CD8-positive, alpha-beta T cell (primary cell): ENCODE measurements at regions of chr11 and their contacts with region 1.

Region 1: DNA sequence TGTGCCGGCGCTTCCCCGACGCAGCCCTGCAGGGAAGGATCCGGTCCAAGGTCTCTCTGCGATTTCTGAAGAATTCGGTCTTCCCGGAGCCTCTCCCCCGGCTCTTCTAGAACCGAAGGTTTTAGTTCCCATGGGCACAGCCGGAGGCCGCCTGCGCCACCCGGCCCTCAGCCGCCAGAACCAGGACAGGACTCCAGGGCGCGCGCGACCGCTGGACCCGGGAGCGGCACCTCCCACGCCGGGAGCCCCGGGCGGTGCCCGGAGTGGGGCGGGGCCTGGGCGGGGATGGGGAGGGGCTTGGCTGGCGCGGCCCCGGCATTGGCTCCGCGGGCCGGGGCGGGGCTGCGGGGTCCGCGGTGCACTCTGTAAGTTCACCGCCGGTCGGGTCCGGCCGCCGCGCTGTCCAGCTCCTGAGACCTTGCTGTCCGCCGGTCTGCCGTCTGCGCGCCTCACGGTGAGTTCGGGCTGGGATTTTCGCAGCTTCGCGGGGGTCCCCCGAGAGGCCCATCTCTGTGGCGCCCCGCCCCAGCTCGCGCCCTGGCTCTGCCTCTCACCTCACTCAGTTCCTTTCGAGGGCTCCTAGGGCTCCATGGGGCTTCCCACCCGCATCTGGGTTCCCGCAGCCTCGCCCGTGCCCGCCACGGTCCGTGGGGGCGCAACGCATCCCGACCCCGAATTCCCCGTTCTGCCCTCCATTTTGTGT is at the start of gene CDC42EP2:
- DNase-seq: peak; percentile 45 to 83 (median 72)
- ATAC-seq: peak; percentile 90
- H3K4me3 ChIP-seq: peak within 1 kb of the TSS; percentile 73 to 81
- H3K4me3 Mint-ChIP-seq: peak within 1 kb of the TSS; percentile 80
- H3K27ac ChIP-seq: no peak within 1 kb of the TSS
- H3K27ac Mint-ChIP-seq: no peak within 1 kb of the TSS
- H3K4me1 ChIP-seq: peaks cover 15% of the 10 kb centered on the region
- H3K4me1 Mint-ChIP-seq: peaks cover 7% of the 10 kb centered on the region
- H3K27me3 ChIP-seq: peaks cover 0 to 5% of the 10 kb centered on the region in 2 experiments
- H3K27me3 Mint-ChIP-seq: no peaks in the 10 kb centered on the region
- CTCF ChIP-seq: no peak
- total RNA-seq, gene CDC42EP2: 0.67 to 0.76 TPM

Region 2: DNA sequence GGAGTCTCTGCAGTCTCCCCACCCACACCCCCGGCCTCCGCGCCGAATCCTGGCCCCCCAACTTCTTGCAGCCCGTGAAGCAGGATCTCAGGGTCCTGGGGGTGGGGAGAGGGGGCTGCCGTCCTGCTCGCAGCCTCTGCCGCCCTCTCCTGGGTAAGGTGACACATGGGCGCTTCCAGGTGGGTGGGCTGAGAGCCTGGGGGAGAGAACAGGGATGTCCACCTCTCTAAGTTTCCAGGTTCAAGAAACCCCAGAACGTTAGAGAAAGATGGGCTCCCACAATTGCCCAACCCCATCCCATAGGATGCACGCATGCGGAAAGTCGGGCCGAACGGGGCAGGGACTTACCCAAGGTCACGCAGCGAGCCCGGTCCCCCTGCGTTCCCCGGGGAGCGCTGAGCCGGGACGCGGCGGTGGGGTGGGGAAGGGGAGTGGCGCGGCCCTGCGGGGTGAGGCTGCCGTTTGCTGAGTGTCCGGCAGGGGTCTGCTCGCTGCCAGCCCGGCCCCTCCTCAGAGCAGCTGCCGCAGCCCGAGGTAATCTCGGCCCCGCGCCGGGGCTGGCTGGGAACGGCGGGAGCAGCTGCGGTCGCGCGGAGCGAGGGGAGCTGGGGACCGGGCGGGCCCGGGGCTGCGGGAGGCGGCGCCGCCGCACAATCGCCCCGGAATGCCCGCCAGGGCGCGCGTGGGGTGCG is 133.6 kb before region 1 on chr11:
- CTCF ChIA-PET with region 1: interaction called, 10 read pairs
- POLR2A ChIA-PET with region 1: no interaction called
- intact Hi-C with region 1: no loop called
- DNase-seq: peak; percentile 17 to 73 (median 53)
- ATAC-seq: peak; percentile 68
- H3K4me3 ChIP-seq: peak overlapping the region; percentile 85 to 95
- H3K4me3 Mint-ChIP-seq: peak overlapping the region; percentile 91
- H3K27ac ChIP-seq: peak overlapping the region in 1 of 2 experiments; percentile 23
- H3K27ac Mint-ChIP-seq: peak overlapping the region; percentile 80
- H3K4me1 ChIP-seq: peaks cover 24% of the 10 kb centered on the region
- H3K4me1 Mint-ChIP-seq: peaks cover 28% of the 10 kb centered on the region
- H3K27me3 ChIP-seq: no peaks in the 10 kb centered on the region
- H3K27me3 Mint-ChIP-seq: no peaks in the 10 kb centered on the region
- CTCF ChIP-seq: peak; percentile 57

Region 3: GRCh38 chr11:65213322-65214211 is 101.1 kb before region 1 on chr11:
- CTCF ChIA-PET with region 1: interaction called, 11 read pairs
- POLR2A ChIA-PET with region 1: interaction called, 3 read pairs
- intact Hi-C with region 1: no loop called
- DNase-seq: peak in 7 of 9 experiments; percentile 13 to 52 (median 31)
- ATAC-seq: peak; percentile 76
- H3K4me3 ChIP-seq: peak overlapping the region; percentile 19 to 32
- H3K4me3 Mint-ChIP-seq: peak overlapping the region; percentile 50
- H3K27ac ChIP-seq: no peak overlapping the region
- H3K27ac Mint-ChIP-seq: peak overlapping the region; percentile 57
- H3K4me1 ChIP-seq: peaks cover 18% of the 10 kb centered on the region
- H3K4me1 Mint-ChIP-seq: peaks cover 32% of the 10 kb centered on the region
- H3K27me3 ChIP-seq: no peaks in the 10 kb centered on the region
- H3K27me3 Mint-ChIP-seq: no peaks in the 10 kb centered on the region
- CTCF ChIP-seq: no peak

Region 4: GRCh38 chr11:65225279-65226102 is 89.2 kb before region 1 on chr11:
- CTCF ChIA-PET with region 1: interaction called, 110 read pairs
- POLR2A ChIA-PET with region 1: interaction called, 4 read pairs
- intact Hi-C with region 1: loop called (anchors 1 kb)
- DNase-seq: peak in 8 of 9 experiments; percentile 41 to 74 (median 65)
- ATAC-seq: peak; percentile 92
- H3K4me3 ChIP-seq: peak overlapping the region; percentile 39 to 53
- H3K4me3 Mint-ChIP-seq: peak overlapping the region; percentile 74
- H3K27ac ChIP-seq: no peak overlapping the region
- H3K27ac Mint-ChIP-seq: no peak overlapping the region
- H3K4me1 ChIP-seq: peaks cover 13% of the 10 kb centered on the region
- H3K4me1 Mint-ChIP-seq: peaks cover 10% of the 10 kb centered on the region
- H3K27me3 ChIP-seq: peaks cover 0 to 12% of the 10 kb centered on the region in 2 experiments
- H3K27me3 Mint-ChIP-seq: peaks cover 8% of the 10 kb centered on the region
- CTCF ChIP-seq: peak; percentile 41

Region 5: GRCh38 chr11:65274735-65275682 is 39.6 kb before region 1 on chr11:
- CTCF ChIA-PET with region 1: interaction called, 39 read pairs
- POLR2A ChIA-PET with region 1: interaction called, 3 read pairs
- intact Hi-C with region 1: loop called (anchors 1 to 2 kb)
- DNase-seq: peak in 5 of 9 experiments; percentile 13 to 59 (median 44)
- ATAC-seq: peak; percentile 48
- H3K4me3 ChIP-seq: no peak overlapping the region
- H3K4me3 Mint-ChIP-seq: no peak overlapping the region
- H3K27ac ChIP-seq: no peak overlapping the region
- H3K27ac Mint-ChIP-seq: no peak overlapping the region
- H3K4me1 ChIP-seq: no peaks in the 10 kb centered on the region
- H3K4me1 Mint-ChIP-seq: no peaks in the 10 kb centered on the region
- H3K27me3 ChIP-seq: no peaks in the 10 kb centered on the region
- H3K27me3 Mint-ChIP-seq: no peaks in the 10 kb centered on the region
- CTCF ChIP-seq: peak; percentile 44

Region 6: DNA sequence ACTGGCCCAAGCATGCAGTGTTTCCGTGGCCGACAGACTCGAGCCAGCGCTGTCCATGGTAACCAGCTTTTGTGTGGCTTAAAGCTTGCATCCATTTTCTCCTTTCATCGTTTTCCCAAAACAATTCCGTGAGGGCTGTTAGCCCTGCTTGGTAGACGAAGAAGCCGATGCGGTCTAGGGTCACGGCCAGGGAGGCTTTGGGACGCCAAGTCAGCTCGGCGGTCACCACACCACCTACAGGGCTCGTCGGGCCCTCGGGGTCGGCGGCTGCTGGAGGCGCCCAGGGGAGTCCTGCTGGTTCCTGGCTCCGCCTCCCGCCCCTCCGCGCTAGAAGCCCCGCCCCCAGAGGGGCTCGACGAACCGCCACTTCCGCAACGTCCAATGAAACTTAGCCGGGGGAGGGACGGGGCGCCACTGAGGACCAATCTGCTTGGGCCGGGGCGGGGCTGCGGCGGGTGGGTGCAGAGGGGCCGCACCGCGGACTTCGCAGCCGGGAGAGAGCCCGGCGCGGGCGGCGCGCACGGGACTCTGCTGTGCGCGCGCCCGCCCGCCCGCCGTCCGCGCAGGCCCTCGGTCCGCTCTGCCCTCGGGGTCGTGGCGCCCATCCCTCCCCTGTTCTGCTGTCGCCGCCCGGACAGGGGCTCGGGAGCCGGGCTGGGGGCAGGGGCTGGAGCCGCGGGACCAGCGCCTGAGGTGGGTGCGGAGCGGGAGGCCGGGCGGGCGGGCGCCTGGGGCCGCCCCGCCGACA is 39.8 kb after region 1 on chr11 and contains the start of gene TIGD3:
- CTCF ChIA-PET with region 1: interaction called, 25 read pairs
- POLR2A ChIA-PET with region 1: no interaction called
- intact Hi-C with region 1: no loop called
- DNase-seq: peak; percentile 94 to 99 (median 98)
- ATAC-seq: peak; percentile 97
- H3K4me3 ChIP-seq: peak within 1 kb of the TSS; percentile 49 to 51
- H3K4me3 Mint-ChIP-seq: peak within 1 kb of the TSS; percentile 91
- H3K27ac ChIP-seq: peak within 1 kb of the TSS in 1 of 2 experiments; percentile 58
- H3K27ac Mint-ChIP-seq: peak within 1 kb of the TSS; percentile 81
- H3K4me1 ChIP-seq: peaks cover 6% of the 10 kb centered on the region
- H3K4me1 Mint-ChIP-seq: peaks cover 13% of the 10 kb centered on the region
- H3K27me3 ChIP-seq: no peaks in the 10 kb centered on the region
- H3K27me3 Mint-ChIP-seq: no peaks in the 10 kb centered on the region
- CTCF ChIP-seq: no peak
- total RNA-seq, gene TIGD3: 0.35 to 0.75 TPM

Region 7: GRCh38 chr11:66694732-66695207 is 1380.1 kb after region 1 on chr11:
- CTCF ChIA-PET with region 1: no interaction called
- POLR2A ChIA-PET with region 1: no interaction called
- intact Hi-C with region 1: no loop called
- DNase-seq: peak; percentile 65 to 89 (median 85)
- ATAC-seq: peak; percentile 95
- H3K4me3 ChIP-seq: no peak overlapping the region
- H3K4me3 Mint-ChIP-seq: no peak overlapping the region
- H3K27ac ChIP-seq: no peak overlapping the region
- H3K27ac Mint-ChIP-seq: no peak overlapping the region
- H3K4me1 ChIP-seq: no peaks in the 10 kb centered on the region
- H3K4me1 Mint-ChIP-seq: no peaks in the 10 kb centered on the region
- H3K27me3 ChIP-seq: no peaks in the 10 kb centered on the region
- H3K27me3 Mint-ChIP-seq: no peaks in the 10 kb centered on the region
- CTCF ChIP-seq: peak; percentile 93